Activated CD4-positive, alpha-beta T cell treated with anti-CD3 and anti-CD28 coated beads, Interleukin-2, amount 10 ng/mL, durations not matched to agents 24 days and 14 days (primary cell): ENCODE measurements at regions of chr7 and their contacts with region 1.

Region 1: DNA sequence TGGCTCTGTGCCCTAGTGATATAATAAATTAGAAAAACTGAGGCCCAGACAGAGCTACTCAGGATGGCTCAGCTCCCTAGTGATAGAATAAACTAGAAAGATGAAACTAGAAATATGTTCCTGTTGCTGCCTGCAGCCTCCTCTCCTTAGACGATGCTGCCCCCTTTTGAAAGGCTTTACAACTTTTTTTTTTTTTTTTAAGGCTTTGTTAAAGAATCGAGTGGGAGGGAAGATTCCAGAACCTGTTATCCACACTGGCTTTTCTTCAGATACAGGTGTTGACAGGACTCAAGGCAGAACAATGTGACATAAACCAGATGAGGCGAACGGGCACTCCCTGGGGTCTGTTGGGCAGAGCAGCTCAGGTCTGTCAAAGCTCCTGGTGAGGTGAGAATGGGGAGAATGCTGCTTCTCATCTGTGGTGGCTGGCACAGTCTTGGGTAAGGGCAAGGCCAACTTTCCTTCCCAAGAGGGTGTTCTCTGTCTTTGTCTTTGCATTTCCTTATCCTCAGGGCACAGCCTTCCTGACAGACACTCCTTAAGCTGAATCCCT is 175.1 kb downstream of the COBL start:
- DNase-seq: peak; percentile 69
- H3K4me3 Mint-ChIP-seq: no peak overlapping the region
- H3K27ac Mint-ChIP-seq: no peak overlapping the region
- H3K4me1 Mint-ChIP-seq: peaks cover 17% of the 10 kb centered on the region
- H3K27me3 Mint-ChIP-seq: peaks cover 12% of the 10 kb centered on the region

Region 2: GRCh38 chr7:50679218-50680007 is 462.1 kb before region 1 on chr7:
- intact Hi-C with region 1: loop called (anchors 5 kb)
- DNase-seq: no peak
- H3K4me3 Mint-ChIP-seq: no peak overlapping the region
- H3K27ac Mint-ChIP-seq: no peak overlapping the region
- H3K4me1 Mint-ChIP-seq: peaks cover 2% of the 10 kb centered on the region
- H3K27me3 Mint-ChIP-seq: peaks cover 18% of the 10 kb centered on the region

Region 3: DNA sequence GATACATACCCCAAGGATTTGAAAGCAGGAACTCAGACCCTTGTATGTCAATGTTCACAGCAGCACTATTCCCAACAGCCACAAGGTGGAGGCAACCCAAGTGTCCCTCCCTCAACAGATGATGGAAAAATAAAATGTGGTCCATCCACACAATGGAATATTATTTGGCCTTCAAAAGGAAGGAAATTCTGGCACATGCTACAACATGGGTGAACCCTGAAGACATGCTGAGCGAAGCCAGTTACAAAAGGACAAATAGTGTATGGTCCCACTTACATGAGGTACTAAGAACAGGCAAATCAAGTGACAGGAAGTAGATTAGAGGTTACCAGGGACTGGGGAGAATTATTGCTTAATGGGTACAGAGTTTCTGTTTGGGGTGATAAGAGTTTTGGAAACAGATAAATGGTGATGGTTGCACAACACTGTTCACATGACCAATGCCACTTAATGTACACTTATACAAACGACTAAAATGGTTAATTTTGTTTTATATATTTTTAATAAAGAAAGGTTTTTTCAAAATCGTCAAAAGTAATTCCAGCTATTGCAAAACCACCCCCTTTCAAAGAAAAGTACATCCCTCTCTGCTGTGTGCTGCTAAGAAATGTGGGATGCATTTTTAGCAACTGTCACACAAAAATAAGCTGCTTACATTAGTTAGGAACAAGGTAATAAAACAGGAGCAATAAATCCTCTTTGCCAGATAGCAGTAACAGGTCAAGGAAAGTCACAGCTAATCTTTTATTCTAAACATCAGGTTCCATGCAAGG is 444.5 kb before region 1 on chr7:
- intact Hi-C with region 1: loop called (anchors 5 kb)
- DNase-seq: peak; percentile 65
- H3K4me3 Mint-ChIP-seq: no peak overlapping the region
- H3K27ac Mint-ChIP-seq: no peak overlapping the region
- H3K4me1 Mint-ChIP-seq: peaks cover 2% of the 10 kb centered on the region
- H3K27me3 Mint-ChIP-seq: peaks cover 5% of the 10 kb centered on the region

Region 4: DNA sequence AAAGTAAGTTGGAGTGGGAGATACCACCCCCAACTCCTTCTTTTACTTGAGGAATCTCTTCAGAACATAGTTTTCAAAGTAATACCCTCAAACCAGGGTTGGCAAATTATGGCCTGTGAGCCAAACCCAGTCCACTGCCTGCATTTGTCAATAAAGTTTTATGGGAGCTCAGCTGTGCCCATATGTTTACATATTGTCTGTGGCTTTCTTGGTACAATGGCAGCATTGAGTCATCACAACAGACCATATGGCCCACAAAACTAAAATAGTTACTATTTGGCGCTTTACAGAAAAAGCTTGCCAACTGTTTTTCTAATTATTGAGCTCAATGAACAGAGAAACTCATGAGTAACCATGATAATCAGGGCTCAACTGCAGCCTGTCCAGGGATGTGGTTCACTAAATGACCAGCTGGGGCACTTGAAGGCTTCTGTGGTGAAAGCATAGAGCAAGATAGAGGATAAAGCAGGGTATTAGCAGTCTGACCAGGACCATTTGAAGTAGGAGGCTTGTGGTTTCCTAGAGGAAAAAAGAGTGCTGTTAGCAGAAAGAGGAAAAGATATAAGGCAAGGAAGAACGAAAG is 162.8 kb before region 1 on chr7:
- intact Hi-C with region 1: no loop called
- DNase-seq: peak; percentile 18
- H3K4me3 Mint-ChIP-seq: no peak overlapping the region
- H3K27ac Mint-ChIP-seq: no peak overlapping the region
- H3K4me1 Mint-ChIP-seq: peaks cover 2% of the 10 kb centered on the region
- H3K27me3 Mint-ChIP-seq: no peaks in the 10 kb centered on the region